ENCODE measurements at regions of chr9 and their contacts with region 1.

Region 1: DNA sequence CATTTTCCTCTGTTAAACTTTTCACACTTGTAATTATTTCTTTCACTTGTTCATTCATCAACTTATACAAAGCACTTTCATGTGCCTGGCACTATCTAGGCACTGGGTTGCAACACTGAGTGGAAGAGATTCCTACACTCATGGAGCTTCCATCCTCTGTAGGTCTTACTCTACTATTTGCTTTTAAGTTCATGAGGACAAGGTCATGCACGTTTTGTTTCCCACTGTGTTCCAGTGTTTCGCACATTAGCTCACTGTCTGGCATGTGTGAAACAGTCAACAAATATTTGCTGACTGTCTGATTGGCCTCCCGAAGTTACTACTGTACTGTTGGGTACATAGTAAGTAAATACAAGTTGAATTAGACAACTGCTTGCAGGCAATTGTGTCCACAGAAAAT is 87.9 kb upstream of the IFNK start:
- DNase-seq: no peak
- H3K4me3 ChIP-seq: no peak overlapping the region
- H3K27ac ChIP-seq: peak overlapping the region in 1 of 2 donors; percentile 82
- H3K4me1 ChIP-seq: peaks cover 33% of the 10 kb centered on the region
- H3K27me3 ChIP-seq: no peaks in the 10 kb centered on the region
- CTCF ChIP-seq: no peak
- EP300 ChIP-seq: no peak
- POLR2A ChIP-seq: no peak

Region 2: GRCh38 chr9:27377147-27377807 is 59.0 kb before region 1 on chr9:
- intact Hi-C with region 1: loop called in 1 of 4 experiments (anchors 10 kb)
- DNase-seq: no peak
- H3K4me3 ChIP-seq: no peak overlapping the region
- H3K27ac ChIP-seq: no peak overlapping the region
- H3K4me1 ChIP-seq: peaks cover 7% of the 10 kb centered on the region
- H3K27me3 ChIP-seq: no peaks in the 10 kb centered on the region
- CTCF ChIP-seq: no peak
- EP300 ChIP-seq: no peak
- POLR2A ChIP-seq: no peak